AG04450 (cell line): ENCODE measurements at regions of chr7 and their contacts with region 1.

Region 1: DNA sequence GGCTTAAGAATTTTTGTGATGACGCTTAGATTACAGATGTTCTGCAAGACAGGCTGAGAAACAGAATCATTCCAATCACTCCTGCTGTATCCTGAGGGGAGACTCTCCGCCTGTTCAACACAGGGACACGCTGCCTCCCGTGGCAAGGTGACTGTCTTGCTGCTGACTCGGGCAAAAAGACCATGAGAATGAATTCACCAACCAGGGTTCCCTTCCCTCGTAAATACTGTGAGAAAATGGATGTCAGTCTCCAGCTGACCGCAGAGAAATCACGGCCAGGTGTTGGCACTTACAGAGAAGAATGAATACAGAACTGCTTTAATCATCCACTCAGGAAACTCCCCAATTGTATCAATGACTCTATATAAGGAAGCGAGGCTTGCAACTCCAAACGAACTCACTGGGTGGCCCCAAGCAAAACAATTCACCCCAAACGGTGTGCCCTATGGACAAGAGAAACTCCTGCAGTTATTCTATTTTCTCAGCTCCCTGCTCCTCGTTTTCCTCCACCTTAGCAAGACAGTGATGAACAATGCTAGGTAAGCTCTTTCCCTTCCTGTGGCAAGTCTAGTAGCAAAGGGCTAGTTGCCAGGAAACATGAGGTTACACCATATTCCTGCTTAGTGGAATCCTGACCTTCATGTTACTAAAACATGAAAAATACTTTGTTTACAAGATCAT is 22.8 kb downstream of the GNA12 start:
- DNase-seq: peak; percentile 50
- H3K4me3 ChIP-seq: no peak overlapping the region
- H3K27ac ChIP-seq: peak overlapping the region; percentile 98
- H3K27me3 ChIP-seq: no peaks in the 10 kb centered on the region
- CTCF ChIP-seq: no peak

Region 2: GRCh38 chr7:2641406-2642393 is 179.6 kb before region 1 on chr7:
- CTCF ChIA-PET with region 1: no interaction called
- POLR2A ChIA-PET with region 1: no interaction called
- DNase-seq: peak; percentile 90
- H3K4me3 ChIP-seq: peak overlapping the region; percentile 7; the same call in 1 of the 2 replicates
- H3K27ac ChIP-seq: peak overlapping the region; percentile 97
- H3K27me3 ChIP-seq: no peaks in the 10 kb centered on the region
- CTCF ChIP-seq: no peak

Region 3: GRCh38 chr7:2757904-2758672 is 63.2 kb before region 1 on chr7:
- CTCF ChIA-PET with region 1: no interaction called
- POLR2A ChIA-PET with region 1: interaction called, 15 read pairs
- DNase-seq: peak; percentile 95
- H3K4me3 ChIP-seq: peak overlapping the region; percentile 30
- H3K27ac ChIP-seq: peak overlapping the region; percentile 97
- H3K27me3 ChIP-seq: no peaks in the 10 kb centered on the region
- CTCF ChIP-seq: no peak

Region 4: GRCh38 chr7:2833072-2833910 is 12.0 kb after region 1 on chr7:
- CTCF ChIA-PET with region 1: no interaction called
- POLR2A ChIA-PET with region 1: no interaction called
- DNase-seq: no peak
- H3K4me3 ChIP-seq: no peak overlapping the region
- H3K27ac ChIP-seq: no peak overlapping the region
- H3K27me3 ChIP-seq: no peaks in the 10 kb centered on the region
- CTCF ChIP-seq: no peak

Region 5: DNA sequence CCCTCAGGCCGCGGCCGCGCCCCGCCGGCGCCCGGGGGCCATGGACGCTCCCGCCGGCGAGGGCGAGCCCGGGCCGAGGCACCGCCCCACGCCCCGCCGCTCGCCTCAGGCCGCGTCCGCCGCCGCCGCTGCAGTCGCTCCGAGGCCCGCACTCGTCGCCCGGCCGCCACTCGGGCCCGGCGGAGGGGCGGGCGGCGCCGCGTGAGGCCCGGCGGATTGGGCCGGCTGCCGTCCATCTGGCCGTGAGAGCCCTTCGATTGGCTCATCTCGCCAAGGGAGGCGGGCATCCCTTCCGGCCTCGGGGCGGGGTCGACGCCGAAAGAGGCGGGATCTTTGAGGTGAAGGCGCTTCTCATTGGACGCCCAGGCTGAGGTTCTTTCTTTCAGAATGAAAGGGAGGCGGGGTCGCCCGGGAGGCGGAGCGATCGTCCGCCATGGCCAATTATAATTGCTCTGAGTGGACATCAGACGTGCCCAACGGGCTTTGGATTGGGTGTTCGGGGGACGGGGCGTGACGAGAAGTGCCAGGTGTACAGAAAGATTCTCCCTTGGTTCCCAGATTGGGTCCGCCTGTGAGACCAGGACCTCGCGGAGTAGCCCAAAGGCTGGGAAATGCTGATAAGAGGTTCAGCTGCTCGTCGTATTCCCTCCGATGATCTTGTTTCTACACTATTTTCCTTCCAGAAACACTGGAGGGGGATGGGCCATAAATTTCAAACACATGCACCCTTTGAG is 23.0 kb after region 1 on chr7 and contains the start of gene GNA12:
- CTCF ChIA-PET with region 1: no interaction called
- POLR2A ChIA-PET with region 1: interaction called, 15 read pairs
- DNase-seq: peak; percentile 96
- H3K4me3 ChIP-seq: peak within 1 kb of the TSS; percentile 77
- H3K27ac ChIP-seq: peak within 1 kb of the TSS; percentile 11
- H3K27me3 ChIP-seq: no peaks in the 10 kb centered on the region
- CTCF ChIP-seq: no peak
- polyA plus RNA-seq, gene GNA12: 97.4 and 110 TPM in 2 replicates